CD4-positive, alpha-beta memory T cell (primary cell): ENCODE measurements at regions of chr6 and their contacts with region 1.

Region 1: GRCh38 chr6:42547407-42548329 is 16.2 kb upstream of the UBR2 start:
- DNase-seq: peak; percentile 73 to 85 (median 82)
- H3K4me3 ChIP-seq: peak overlapping the region in 1 of 2 donors; percentile 18
- H3K4me3 Mint-ChIP-seq: peak overlapping the region; percentile 59 to 76 (median 74)
- H3K27ac ChIP-seq: no peak overlapping the region
- H3K27ac Mint-ChIP-seq: peak overlapping the region in 6 of 7 donors; percentile 41 to 93 (median 56)
- H3K4me1 ChIP-seq: peaks cover 9% of the 10 kb centered on the region
- H3K4me1 Mint-ChIP-seq: peaks cover 5 to 13% (median 9%) of the 10 kb centered on the region in 4 donors
- H3K27me3 ChIP-seq: no peaks in the 10 kb centered on the region
- H3K27me3 Mint-ChIP-seq: peaks cover 2 to 4% of the 10 kb centered on the region in 2 donors

Region 2: DNA sequence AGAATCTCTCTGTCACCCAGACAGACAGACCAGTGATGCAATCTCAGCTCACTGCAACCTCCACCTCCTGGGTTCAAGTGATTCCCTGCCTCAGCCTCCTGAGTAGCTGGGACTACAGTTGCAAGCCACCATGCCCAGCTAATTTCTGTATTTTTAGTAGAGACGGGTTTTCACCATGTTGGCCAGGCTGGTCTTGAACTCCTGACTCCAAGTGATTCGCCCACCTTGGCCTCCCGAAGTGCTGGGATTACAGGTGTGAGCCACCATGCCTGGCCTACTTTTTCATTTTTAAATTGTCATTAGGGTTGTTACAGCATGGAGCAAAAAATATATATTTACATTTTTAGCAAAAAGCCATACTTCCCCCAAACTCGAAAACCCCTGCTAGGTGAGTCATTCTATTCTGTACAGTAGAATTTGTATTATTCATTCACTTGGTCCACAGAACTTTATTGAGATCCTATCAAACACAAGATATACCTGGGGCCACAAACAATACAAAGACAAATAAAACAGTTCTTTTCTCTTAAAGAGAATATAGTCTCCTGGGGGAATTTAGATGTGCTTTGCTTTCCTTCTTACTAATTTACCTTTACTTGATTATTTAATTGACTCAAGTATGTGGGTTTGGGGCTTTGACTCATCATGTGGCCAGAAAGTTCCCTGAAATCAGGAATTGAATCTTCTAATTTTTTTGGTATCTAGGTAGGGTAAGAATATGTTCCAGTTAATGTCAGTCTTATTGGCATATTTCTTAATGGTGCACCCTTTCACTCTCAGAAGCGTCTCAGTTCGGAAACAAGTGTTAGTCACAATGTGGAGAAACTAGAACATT is 589.4 kb before region 1 on chr6:
- CTCF ChIA-PET with region 1: no interaction called
- POLR2A ChIA-PET with region 1: no interaction called
- intact Hi-C with region 1: no loop called
- DNase-seq: no peak
- H3K4me3 ChIP-seq: no peak overlapping the region
- H3K4me3 Mint-ChIP-seq: peak overlapping the region in 5 of 8 donors; percentile 3 to 66 (median 56)
- H3K27ac ChIP-seq: no peak overlapping the region
- H3K27ac Mint-ChIP-seq: peak overlapping the region; percentile 16 to 87 (median 45)
- H3K4me1 ChIP-seq: peaks cover 73% of the 10 kb centered on the region
- H3K4me1 Mint-ChIP-seq: peaks cover 44 to 77% (median 57%) of the 10 kb centered on the region in 4 donors
- H3K27me3 ChIP-seq: no peaks in the 10 kb centered on the region
- H3K27me3 Mint-ChIP-seq: no peaks in the 10 kb centered on the region

Region 3: GRCh38 chr6:42217519-42218367 is 329.9 kb before region 1 on chr6 and contains the start of gene MRPS10:
- CTCF ChIA-PET with region 1: interaction called, 59 read pairs
- POLR2A ChIA-PET with region 1: interaction called, 6 read pairs
- intact Hi-C with region 1: loop called (anchors 1 kb)
- DNase-seq: peak; percentile 88 to 93 (median 90)
- H3K4me3 ChIP-seq: peak within 1 kb of the TSS; percentile 71 to 72
- H3K4me3 Mint-ChIP-seq: peak within 1 kb of the TSS; percentile 95 to 99 (median 98)
- H3K27ac ChIP-seq: peak within 1 kb of the TSS; percentile 81
- H3K27ac Mint-ChIP-seq: peak within 1 kb of the TSS; percentile 90 to 98 (median 97)
- H3K4me1 ChIP-seq: peaks cover 29% of the 10 kb centered on the region
- H3K4me1 Mint-ChIP-seq: peaks cover 12 to 28% (median 20%) of the 10 kb centered on the region in 4 donors
- H3K27me3 ChIP-seq: no peaks in the 10 kb centered on the region
- H3K27me3 Mint-ChIP-seq: no peaks in the 10 kb centered on the region
- total RNA-seq, gene MRPS10: 22.6 to 25.1 TPM

Region 4: DNA sequence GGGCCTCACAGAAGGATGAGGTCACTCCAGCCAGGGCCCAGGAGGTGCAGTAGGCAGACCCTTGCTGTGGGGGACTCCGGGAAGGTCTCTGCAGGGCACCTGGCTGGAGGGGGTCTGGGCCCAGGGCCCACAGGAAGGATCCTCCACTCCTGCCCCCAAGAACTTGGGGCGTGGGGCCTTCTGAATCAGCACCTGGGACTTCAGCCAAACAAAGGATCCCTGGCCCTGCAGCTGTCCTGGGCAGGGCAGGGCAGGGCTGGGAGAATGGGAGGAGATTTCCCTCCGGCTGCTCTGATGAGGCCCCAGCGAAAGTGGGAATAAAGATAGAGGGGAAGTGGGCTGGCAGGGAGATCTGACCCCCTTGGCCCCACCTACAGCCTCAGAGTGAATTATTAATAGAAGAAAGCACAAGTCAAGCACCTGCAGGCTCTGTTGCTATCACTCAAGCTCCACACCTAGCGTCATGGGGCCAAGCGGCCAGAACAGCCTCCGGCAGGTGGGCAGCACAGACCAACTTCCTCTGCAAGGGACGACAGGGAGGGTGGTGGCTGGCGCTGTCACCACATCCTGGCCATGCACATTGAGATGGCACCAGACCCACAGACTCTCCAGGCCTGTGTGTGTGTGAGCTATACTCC is 268.4 kb before region 1 on chr6:
- CTCF ChIA-PET with region 1: interaction called, 24 read pairs
- POLR2A ChIA-PET with region 1: interaction called, 3 read pairs
- intact Hi-C with region 1: no loop called
- DNase-seq: peak in 3 of 5 donors; percentile 14 to 21 (median 18)
- H3K4me3 ChIP-seq: no peak overlapping the region
- H3K4me3 Mint-ChIP-seq: peak overlapping the region in 7 of 8 donors; percentile 40 to 65 (median 55)
- H3K27ac ChIP-seq: peak overlapping the region; percentile 10
- H3K27ac Mint-ChIP-seq: peak overlapping the region; percentile 65 to 91 (median 87)
- H3K4me1 ChIP-seq: peaks cover 46% of the 10 kb centered on the region
- H3K4me1 Mint-ChIP-seq: peaks cover 33 to 58% (median 49%) of the 10 kb centered on the region in 4 donors
- H3K27me3 ChIP-seq: no peaks in the 10 kb centered on the region
- H3K27me3 Mint-ChIP-seq: no peaks in the 10 kb centered on the region

Region 5: DNA sequence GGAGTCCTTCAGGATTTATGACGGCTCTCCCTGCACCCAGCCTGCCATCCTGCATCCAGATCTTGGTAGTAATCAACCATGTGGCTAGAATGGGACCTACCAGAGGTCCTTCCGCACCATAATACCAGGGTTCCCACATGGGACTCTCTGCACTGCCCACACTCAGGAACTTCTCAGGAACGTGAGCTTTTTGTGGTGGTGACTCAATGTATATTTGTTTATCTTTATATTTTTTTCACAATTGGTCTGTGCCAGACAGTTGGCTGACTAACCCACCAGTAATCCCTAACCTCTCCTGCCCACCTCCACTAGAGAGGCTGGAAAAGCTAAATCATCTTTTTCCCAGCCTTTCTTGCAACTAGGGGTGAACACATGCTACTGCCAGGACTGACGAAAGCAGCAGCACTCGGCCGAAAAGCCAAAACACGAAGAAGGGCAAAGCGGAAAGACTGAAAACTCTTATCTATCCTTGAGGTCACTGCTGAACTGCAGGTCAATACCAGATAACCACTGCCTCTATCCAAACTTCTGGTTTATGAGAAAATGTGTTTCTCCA is 208.9 kb before region 1 on chr6:
- CTCF ChIA-PET with region 1: interaction called, 13 read pairs
- POLR2A ChIA-PET with region 1: no interaction called
- intact Hi-C with region 1: no loop called
- DNase-seq: no peak
- H3K4me3 ChIP-seq: no peak overlapping the region
- H3K4me3 Mint-ChIP-seq: no peak overlapping the region
- H3K27ac ChIP-seq: no peak overlapping the region
- H3K27ac Mint-ChIP-seq: peak overlapping the region in 3 of 7 donors; percentile 23 to 67 (median 64)
- H3K4me1 ChIP-seq: peaks cover 45% of the 10 kb centered on the region
- H3K4me1 Mint-ChIP-seq: peaks cover 36 to 79% (median 56%) of the 10 kb centered on the region in 4 donors
- H3K27me3 ChIP-seq: no peaks in the 10 kb centered on the region
- H3K27me3 Mint-ChIP-seq: no peaks in the 10 kb centered on the region

Region 6: GRCh38 chr6:42440778-42441696 is 106.6 kb before region 1 on chr6:
- CTCF ChIA-PET with region 1: interaction called, 15 read pairs
- POLR2A ChIA-PET with region 1: no interaction called
- intact Hi-C with region 1: no loop called
- DNase-seq: peak in 1 of 5 donors; percentile 71
- H3K4me3 ChIP-seq: peak overlapping the region in 1 of 2 donors; percentile 11
- H3K4me3 Mint-ChIP-seq: peak overlapping the region; percentile 74 to 96 (median 82)
- H3K27ac ChIP-seq: peak overlapping the region; percentile 37
- H3K27ac Mint-ChIP-seq: peak overlapping the region; percentile 77 to 94 (median 86)
- H3K4me1 ChIP-seq: peaks cover 75% of the 10 kb centered on the region
- H3K4me1 Mint-ChIP-seq: peaks cover 45 to 83% (median 65%) of the 10 kb centered on the region in 4 donors
- H3K27me3 ChIP-seq: no peaks in the 10 kb centered on the region
- H3K27me3 Mint-ChIP-seq: no peaks in the 10 kb centered on the region

Region 7: DNA sequence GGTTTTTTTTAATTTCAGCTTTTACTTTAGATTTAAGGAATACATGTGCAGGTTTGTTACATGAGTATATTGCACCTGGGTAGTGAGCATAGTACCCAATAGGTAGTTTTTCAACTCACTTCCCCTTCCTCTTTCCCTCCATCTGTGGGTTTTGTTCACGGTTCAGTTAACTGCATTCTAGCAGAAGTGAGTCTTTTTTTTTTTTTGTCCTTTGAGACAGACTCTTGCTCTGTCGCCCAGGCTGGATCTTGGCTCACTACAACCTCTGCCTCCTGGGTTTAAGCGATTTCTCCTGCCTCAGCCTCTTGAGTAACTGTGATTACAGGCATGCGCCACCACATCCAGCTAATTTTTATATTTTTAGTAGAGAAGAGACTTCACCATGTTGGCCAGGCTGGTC is 24.9 kb after region 1 on chr6:
- CTCF ChIA-PET with region 1: interaction called, 16 read pairs
- POLR2A ChIA-PET with region 1: interaction called, 3 read pairs
- intact Hi-C with region 1: no loop called
- DNase-seq: peak in 2 of 5 donors; percentile 15 to 40
- H3K4me3 ChIP-seq: no peak overlapping the region
- H3K4me3 Mint-ChIP-seq: peak overlapping the region in 6 of 8 donors; percentile 35 to 76 (median 63)
- H3K27ac ChIP-seq: no peak overlapping the region
- H3K27ac Mint-ChIP-seq: peak overlapping the region; percentile 24 to 89 (median 72)
- H3K4me1 ChIP-seq: peaks cover 79% of the 10 kb centered on the region
- H3K4me1 Mint-ChIP-seq: peaks cover 42 to 68% (median 55%) of the 10 kb centered on the region in 4 donors
- H3K27me3 ChIP-seq: no peaks in the 10 kb centered on the region
- H3K27me3 Mint-ChIP-seq: no peaks in the 10 kb centered on the region

Region 8: GRCh38 chr6:43181942-43182860 is 634.5 kb after region 1 on chr6 and contains the start of gene CUL9:
- CTCF ChIA-PET with region 1: no interaction called
- POLR2A ChIA-PET with region 1: no interaction called
- intact Hi-C with region 1: no loop called
- DNase-seq: peak; percentile 78 to 81 (median 79)
- H3K4me3 ChIP-seq: peak within 1 kb of the TSS; percentile 55 to 78
- H3K4me3 Mint-ChIP-seq: peak within 1 kb of the TSS; percentile 83 to 96 (median 91)
- H3K27ac ChIP-seq: peak within 1 kb of the TSS; percentile 78
- H3K27ac Mint-ChIP-seq: peak within 1 kb of the TSS; percentile 81 to 98 (median 92)
- H3K4me1 ChIP-seq: peaks cover 57% of the 10 kb centered on the region
- H3K4me1 Mint-ChIP-seq: peaks cover 40 to 60% (median 49%) of the 10 kb centered on the region in 4 donors
- H3K27me3 ChIP-seq: no peaks in the 10 kb centered on the region
- H3K27me3 Mint-ChIP-seq: no peaks in the 10 kb centered on the region
- total RNA-seq, gene CUL9: 93.8 to 95.2 TPM